ENCODE measurements at regions of chrX and their contacts with region 1.

Region 1: GRCh38 chrX:110412971-110413721 is 54.5 kb downstream of the RTL9 start:
- DNase-seq: peak; percentile 43

Region 2: DNA sequence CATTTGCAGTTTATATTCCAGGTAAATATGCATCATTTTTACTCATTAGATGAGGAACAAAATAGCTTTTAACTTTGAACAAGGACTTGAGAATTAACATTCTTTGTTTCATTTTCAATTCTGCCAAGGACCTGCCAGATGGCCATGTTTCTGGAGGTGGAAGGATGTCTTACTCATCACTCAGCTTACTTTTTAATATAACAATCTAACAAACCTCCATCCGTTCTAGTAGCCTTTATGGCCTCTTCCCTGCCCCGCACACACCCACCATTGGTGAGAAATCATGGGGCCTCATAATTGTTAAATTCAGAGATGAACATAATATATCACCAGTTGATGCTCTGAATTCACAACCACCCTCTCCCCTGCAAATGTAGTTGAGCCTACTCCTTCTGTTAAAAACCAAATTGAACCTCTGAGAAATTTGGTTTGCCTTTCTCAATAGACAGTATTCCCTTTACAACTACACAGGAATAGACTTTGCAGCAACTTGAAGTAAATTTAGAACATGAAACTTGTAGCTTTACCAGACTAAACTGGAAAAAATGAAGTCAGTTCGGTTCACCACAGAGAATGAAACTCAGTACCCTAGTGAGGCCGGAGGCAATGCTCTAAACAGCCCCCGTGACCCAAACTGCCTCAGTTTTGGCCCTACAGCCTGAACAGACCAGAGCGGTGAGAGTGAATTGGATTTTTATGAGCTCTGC is 630.0 kb before region 1 on chrX:
- in situ Hi-C with region 1: no loop called
- DNase-seq: no peak

Region 3: GRCh38 chrX:110180176-110180927 is 232.8 kb before region 1 on chrX:
- in situ Hi-C with region 1: loop called (anchors 25 kb)
- DNase-seq: peak; percentile 14

Region 4: DNA sequence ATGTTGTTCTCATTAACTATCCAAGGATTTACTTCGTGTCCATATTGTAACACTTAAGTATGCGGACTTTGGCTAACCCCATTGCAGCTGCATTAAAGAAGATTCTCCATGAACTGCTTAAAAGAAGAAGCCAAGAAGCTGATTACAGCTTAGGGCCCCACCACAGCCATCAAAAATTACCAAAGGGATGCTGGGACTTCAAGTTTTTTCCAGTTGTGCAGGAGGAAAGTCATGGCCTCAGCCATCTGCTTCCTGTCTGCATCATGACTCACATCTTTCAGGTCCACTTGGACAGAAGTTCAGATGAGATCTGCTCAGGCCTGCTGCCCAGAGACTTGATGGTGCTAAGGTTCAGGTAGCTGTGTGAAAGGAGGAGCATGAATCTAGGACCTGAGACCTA is 895.9 kb after region 1 on chrX:
- in situ Hi-C with region 1: no loop called
- DNase-seq: no peak